ENCODE measurements at regions of chr1 and their contacts with region 1.

Region 1: DNA sequence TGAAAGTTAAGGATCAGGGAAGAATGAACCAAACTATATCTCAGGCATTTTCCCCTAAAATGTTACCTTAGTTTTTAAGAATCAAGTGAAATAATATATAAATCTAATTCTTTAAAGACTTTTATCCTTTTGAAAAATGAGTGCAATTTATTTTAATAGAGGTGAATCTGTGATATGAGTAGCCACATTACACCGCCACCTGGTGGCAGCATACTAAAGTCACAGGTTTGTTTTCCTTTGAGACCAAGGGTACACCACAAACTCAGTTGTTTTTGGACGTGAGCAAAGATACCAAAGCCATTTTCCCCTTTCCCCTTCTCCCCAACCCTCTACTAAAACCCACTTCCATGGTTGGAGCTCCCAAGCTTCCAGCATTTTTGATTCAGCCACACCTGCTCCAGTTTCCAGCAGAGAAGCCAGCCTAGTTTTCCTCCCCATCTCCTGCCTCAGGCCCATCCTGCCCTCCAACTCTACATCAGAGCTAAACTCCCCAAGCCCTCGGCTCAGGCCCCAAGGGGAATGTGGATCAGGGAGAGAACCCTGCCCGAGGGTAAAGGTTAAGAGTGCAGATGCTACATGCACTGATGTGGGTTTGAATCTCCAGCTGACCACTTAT is 22.9 kb upstream of the LDLRAP1 start:
- DNase-seq: peak; percentile 87
- H3K4me3 Mint-ChIP-seq: no peak overlapping the region
- H3K27ac Mint-ChIP-seq: no peak overlapping the region
- H3K4me1 Mint-ChIP-seq: peaks cover 6% of the 10 kb centered on the region
- H3K27me3 Mint-ChIP-seq: no peaks in the 10 kb centered on the region

Region 2: DNA sequence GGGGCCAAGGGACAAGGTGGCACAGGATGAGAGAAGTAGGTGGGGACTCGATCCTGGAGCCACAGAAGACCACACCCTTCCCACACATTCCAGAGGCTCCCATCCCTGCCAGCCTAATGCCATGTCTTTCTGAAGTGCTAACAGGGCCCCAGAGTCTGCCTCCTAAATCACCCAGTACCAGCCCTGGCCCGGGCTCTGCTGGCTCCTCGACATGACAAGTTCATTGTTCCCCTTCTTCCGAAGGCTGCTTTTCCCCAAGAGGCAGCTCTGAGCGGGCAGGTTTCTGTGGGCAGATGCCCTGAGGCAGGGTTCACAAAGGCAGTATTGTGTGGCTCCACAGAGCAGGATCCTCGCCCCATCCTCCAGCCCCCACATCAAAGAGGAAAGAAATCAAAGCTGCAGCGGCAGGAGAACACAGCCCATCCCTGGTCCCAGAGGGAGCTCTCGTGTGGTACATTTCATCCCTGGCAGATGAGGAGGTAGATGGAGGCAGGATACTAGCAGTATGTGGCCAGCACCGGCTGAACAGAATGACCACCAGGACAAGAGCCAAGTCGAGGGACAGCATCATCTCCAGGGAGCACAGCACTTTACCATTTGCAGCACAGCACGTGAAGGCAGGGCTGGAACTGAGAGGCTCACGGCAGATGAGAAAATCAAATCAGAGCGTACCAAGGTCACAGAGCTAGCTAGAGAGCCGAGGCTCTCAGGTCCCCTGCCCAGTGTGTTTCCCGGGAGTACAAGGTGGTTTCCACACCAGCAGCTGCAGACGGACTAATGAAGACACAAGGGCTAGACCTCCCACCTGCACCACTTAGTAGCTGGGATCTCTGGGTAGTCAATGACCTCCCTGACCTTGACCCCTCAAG is 353.0 kb before region 1 on chr1:
- CTCF ChIA-PET with region 1: no interaction called
- intact Hi-C with region 1: no loop called
- DNase-seq: no peak
- H3K4me3 Mint-ChIP-seq: no peak overlapping the region
- H3K27ac Mint-ChIP-seq: no peak overlapping the region
- H3K4me1 Mint-ChIP-seq: no peaks in the 10 kb centered on the region
- H3K27me3 Mint-ChIP-seq: no peaks in the 10 kb centered on the region

Region 3: GRCh38 chr1:25476186-25477097 is 44.1 kb before region 1 on chr1:
- CTCF ChIA-PET with region 1: no interaction called
- intact Hi-C with region 1: loop called (anchors 5 kb)
- DNase-seq: no peak
- H3K4me3 Mint-ChIP-seq: no peak overlapping the region
- H3K27ac Mint-ChIP-seq: peak overlapping the region; percentile 54
- H3K4me1 Mint-ChIP-seq: peaks cover 57% of the 10 kb centered on the region
- H3K27me3 Mint-ChIP-seq: no peaks in the 10 kb centered on the region

Region 4: DNA sequence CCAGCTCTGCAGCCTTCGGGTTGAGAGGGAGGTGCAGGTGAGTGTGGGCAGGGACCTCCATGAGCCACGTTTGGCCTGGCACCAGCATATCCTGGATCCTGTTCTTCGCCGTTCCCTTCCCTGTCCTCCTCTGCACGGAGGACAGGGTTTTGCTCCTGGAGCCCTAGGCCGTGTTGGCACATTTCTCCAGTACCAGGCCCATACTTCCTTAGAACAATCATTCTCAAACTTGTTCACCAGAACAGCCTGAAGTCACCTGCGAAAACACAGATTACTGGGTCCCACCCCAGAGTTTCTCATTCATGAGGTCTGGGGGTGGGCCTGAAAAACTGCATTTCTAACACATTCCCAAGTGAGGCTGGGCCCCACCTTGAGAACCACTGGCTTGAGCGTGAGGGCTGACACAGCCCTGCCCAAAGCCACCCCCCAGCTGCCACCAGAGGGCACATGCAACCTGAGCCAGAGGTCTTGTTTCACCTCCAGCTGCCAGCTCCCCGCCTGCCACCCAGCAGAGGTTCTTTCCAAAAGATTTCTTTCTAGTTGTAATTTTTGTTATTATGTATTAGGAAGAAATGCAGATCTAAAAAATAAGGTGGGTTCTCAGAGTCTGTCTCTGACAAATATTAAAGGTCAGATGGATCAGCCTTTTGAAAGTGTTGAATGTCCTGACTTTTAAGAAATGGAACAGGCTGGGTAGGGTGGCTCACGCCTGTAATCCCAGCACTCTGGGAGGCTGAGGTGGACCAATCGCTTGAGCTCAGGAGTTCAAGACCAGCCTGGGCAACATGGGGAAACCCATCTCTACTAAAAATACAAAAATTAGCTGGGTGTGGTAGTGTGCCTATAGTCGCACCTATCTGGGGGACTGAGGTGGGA is 16.8 kb before region 1 on chr1:
- CTCF ChIA-PET with region 1: interaction called, 54 read pairs
- intact Hi-C with region 1: loop called (anchors 1 kb)
- DNase-seq: peak; percentile 86
- H3K4me3 Mint-ChIP-seq: no peak overlapping the region
- H3K27ac Mint-ChIP-seq: peak overlapping the region; percentile 65
- H3K4me1 Mint-ChIP-seq: peaks cover 40% of the 10 kb centered on the region
- H3K27me3 Mint-ChIP-seq: no peaks in the 10 kb centered on the region

Region 5: DNA sequence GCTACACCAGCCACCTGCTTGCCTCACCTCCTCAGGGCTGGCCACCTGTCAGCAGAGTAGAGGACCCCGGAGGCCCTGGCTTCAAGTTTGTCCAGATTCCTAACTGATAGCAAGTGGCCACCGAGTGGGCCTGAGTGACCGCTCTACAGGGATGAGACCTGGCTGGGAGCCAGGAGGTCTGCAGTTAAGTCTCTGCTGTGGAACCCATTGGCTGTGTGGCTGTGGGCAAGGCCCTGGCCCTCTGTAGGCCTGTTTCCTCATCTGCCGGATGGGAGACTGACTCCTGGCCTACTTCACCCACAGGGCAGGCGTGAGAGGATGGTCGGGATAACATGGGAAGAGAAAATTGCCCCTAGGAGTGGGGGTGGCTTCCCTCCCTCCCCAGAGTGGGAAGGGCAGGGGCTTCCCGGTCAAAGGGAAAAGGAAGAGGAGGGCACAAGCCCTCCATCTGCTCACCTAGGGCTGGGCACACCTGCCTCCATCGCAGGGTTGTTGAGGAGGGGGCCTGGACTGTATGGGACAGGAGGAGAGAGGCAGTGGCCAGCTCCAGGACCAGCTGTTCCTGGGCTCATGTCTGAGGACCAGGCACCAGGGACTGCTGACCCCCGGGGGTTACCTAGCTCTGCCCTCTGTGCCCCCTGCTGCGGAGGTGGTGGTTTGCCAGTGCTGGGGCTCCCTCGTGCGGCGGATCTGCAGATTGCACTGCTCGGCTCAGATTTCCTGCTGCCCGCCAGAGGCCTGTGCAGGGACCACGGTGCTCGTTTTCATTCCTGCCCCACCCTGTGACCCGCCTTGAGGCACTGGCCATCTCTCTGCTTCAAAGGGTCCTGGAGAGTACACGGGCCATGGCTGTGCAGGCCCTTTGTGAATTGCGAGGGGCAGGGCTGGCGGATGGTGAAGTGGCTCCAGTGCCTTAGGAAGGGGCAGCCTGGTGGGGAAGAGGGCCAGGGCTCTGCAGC is 290.1 kb after region 1 on chr1:
- CTCF ChIA-PET with region 1: interaction called, 6 read pairs
- intact Hi-C with region 1: loop called (anchors 2 kb)
- DNase-seq: peak; percentile 87
- H3K4me3 Mint-ChIP-seq: no peak overlapping the region
- H3K27ac Mint-ChIP-seq: no peak overlapping the region
- H3K4me1 Mint-ChIP-seq: peaks cover 5% of the 10 kb centered on the region
- H3K27me3 Mint-ChIP-seq: no peaks in the 10 kb centered on the region

Region 6: GRCh38 chr1:26122988-26123973 is 602.7 kb after region 1 on chr1:
- CTCF ChIA-PET with region 1: no interaction called
- intact Hi-C with region 1: no loop called
- DNase-seq: peak; percentile 37
- H3K4me3 Mint-ChIP-seq: no peak overlapping the region
- H3K27ac Mint-ChIP-seq: peak overlapping the region; percentile 83
- H3K4me1 Mint-ChIP-seq: peaks cover 62% of the 10 kb centered on the region
- H3K27me3 Mint-ChIP-seq: no peaks in the 10 kb centered on the region

Region 7: GRCh38 chr1:26431979-26432695 is 911.6 kb after region 1 on chr1 and contains the start of gene DHDDS:
- CTCF ChIA-PET with region 1: no interaction called
- intact Hi-C with region 1: no loop called
- DNase-seq: peak; percentile 99
- H3K4me3 Mint-ChIP-seq: peak within 1 kb of the TSS; percentile 93
- H3K27ac Mint-ChIP-seq: peak within 1 kb of the TSS; percentile 80
- H3K4me1 Mint-ChIP-seq: peaks cover 26% of the 10 kb centered on the region
- H3K27me3 Mint-ChIP-seq: no peaks in the 10 kb centered on the region
- total RNA-seq, gene DHDDS: 26.2 to 26.3 TPM